ENCODE measurements at regions of chr6 and their contacts with region 1.

Region 1: DNA sequence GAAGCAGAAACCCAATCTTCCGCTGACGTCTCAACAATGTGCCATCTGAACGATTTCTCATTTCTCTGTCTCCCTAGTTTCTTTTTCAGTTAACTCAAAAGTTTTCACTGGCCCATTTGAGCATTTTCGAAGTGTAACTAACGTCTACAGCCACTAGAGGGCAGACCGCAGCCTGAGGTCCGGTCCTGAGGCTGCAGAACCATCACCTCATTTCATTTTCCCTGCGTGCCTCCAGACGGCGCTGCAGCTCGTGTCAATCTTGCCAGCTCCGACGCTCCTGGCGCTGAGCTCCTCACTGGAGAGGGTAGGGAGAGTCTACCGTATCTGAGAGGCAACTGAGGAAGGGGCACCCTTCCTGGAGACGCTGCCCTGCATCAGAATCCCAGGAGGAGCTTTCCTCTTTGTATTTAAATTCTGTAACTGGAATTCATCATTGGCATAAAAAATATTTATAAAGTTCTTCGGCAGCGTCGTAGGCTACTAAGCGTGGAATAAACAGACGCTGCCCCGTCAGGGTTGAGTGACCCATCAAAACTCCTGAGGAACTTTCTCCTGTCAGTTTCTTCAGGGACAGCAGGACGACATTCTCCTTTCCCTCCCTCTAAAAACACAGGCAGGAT is 28.5 kb upstream of the DTNBP1 start:
- DNase-seq: peak; percentile 78
- H3K4me3 Mint-ChIP-seq: peak overlapping the region; percentile 23
- H3K27ac Mint-ChIP-seq: peak overlapping the region; percentile 47
- H3K4me1 Mint-ChIP-seq: peaks cover 18% of the 10 kb centered on the region
- H3K27me3 Mint-ChIP-seq: no peaks in the 10 kb centered on the region

Region 2: GRCh38 chr6:15615802-15616201 is 75.6 kb before region 1 on chr6:
- intact Hi-C with region 1: no loop called
- DNase-seq: no peak
- H3K4me3 Mint-ChIP-seq: no peak overlapping the region
- H3K27ac Mint-ChIP-seq: no peak overlapping the region
- H3K4me1 Mint-ChIP-seq: peaks cover 26% of the 10 kb centered on the region
- H3K27me3 Mint-ChIP-seq: no peaks in the 10 kb centered on the region

Region 3: GRCh38 chr6:15770347-15771143 is 79.2 kb after region 1 on chr6:
- intact Hi-C with region 1: loop called (anchors 2 kb)
- DNase-seq: peak; percentile 12
- H3K4me3 Mint-ChIP-seq: peak overlapping the region; percentile 65
- H3K27ac Mint-ChIP-seq: peak overlapping the region; percentile 98
- H3K4me1 Mint-ChIP-seq: peaks cover 59% of the 10 kb centered on the region
- H3K27me3 Mint-ChIP-seq: no peaks in the 10 kb centered on the region

Region 4: DNA sequence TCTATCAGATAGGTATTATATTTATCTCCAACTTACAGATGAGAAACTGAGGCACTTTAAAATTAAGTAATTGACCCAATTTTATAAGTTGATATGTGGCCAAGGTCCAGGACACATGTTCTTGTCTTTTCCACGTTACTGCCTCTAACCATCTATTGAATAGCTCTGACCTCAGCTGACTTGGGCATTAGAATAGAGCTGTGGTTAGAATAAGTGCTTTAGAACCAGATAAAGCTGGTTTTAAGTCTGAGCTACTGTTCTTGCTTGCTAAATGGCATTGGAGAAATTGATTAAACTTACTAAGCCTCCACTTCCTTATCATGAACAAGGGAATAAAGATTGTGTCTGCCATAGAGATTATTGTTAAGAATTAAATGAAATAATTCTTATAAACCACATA is 119.3 kb after region 1 on chr6:
- intact Hi-C with region 1: no loop called
- DNase-seq: no peak
- H3K4me3 Mint-ChIP-seq: no peak overlapping the region
- H3K27ac Mint-ChIP-seq: no peak overlapping the region
- H3K4me1 Mint-ChIP-seq: peaks cover 10% of the 10 kb centered on the region
- H3K27me3 Mint-ChIP-seq: no peaks in the 10 kb centered on the region

Region 5: DNA sequence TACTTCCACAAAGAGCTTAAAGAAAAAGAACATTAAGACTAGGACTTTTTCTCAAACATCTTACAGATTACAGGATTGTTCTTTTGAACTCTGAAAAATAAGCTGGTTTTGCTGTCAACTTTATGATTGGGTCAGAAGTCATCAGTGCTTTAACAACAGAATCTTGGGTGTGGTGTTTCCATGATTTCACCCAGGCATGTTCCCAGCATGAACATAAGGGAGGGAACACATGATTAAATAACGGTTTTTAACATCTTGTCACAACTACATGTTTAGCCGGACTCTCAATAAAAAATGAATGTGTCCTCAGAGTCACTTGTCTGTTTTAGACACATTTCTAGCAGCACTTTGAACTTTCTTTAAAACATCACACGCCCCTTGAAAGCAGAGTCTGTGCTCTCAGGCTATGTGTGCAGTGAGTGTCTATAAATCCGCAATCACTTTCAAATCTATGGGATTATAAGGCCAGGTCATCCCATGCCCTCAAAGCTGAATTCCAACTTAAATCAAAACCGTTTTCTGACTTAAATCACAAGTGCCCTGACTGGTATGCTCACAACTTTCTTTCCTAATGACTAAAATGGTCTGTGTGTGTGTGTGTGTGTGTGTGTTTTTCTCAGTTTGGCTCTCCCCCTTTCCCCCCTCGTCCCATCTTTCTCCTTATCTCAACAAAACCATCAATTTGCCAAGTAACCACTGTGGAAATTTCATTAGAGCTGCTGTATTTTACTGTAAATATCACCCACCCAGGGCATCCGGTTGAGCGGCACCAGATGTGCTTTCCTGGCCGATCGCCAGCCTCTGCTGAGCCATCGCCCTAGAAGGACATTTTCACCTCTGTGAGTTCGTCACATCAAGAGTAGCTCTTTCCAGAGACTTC is 188.3 kb after region 1 on chr6:
- intact Hi-C with region 1: loop called (anchors 1 kb)
- DNase-seq: peak; percentile 29
- H3K4me3 Mint-ChIP-seq: no peak overlapping the region
- H3K27ac Mint-ChIP-seq: peak overlapping the region; percentile 68
- H3K4me1 Mint-ChIP-seq: peaks cover 49% of the 10 kb centered on the region
- H3K27me3 Mint-ChIP-seq: no peaks in the 10 kb centered on the region

Region 6: GRCh38 chr6:15996030-15996429 is 304.7 kb after region 1 on chr6:
- intact Hi-C with region 1: loop called (anchors 10 kb)
- DNase-seq: no peak
- H3K4me3 Mint-ChIP-seq: no peak overlapping the region
- H3K27ac Mint-ChIP-seq: peak overlapping the region; percentile 55
- H3K4me1 Mint-ChIP-seq: peaks cover 24% of the 10 kb centered on the region
- H3K27me3 Mint-ChIP-seq: no peaks in the 10 kb centered on the region

Region 7: GRCh38 chr6:16136621-16137450 is 445.5 kb after region 1 on chr6:
- intact Hi-C with region 1: loop called (anchors 2 kb)
- DNase-seq: peak; percentile 29
- H3K4me3 Mint-ChIP-seq: peak overlapping the region; percentile 77
- H3K27ac Mint-ChIP-seq: peak overlapping the region; percentile 94
- H3K4me1 Mint-ChIP-seq: peaks cover 68% of the 10 kb centered on the region
- H3K27me3 Mint-ChIP-seq: no peaks in the 10 kb centered on the region

Region 8: GRCh38 chr6:16206595-16207037 is 515.3 kb after region 1 on chr6:
- intact Hi-C with region 1: loop called (anchors 1 kb)
- DNase-seq: peak; percentile 23
- H3K4me3 Mint-ChIP-seq: no peak overlapping the region
- H3K27ac Mint-ChIP-seq: no peak overlapping the region
- H3K4me1 Mint-ChIP-seq: peaks cover 10% of the 10 kb centered on the region
- H3K27me3 Mint-ChIP-seq: peaks cover 28% of the 10 kb centered on the region